Ascending aorta (tissue), 2 donors: ENCODE measurements at regions of chr15 and their contacts with region 1.

Region 1: GRCh38 chr15:58070801-58071418 is 5.4 kb upstream of the ALDH1A2 start:
- DNase-seq: no peak
- H3K4me3 ChIP-seq: no peak overlapping the region
- H3K27ac ChIP-seq: no peak overlapping the region
- H3K4me1 ChIP-seq: no peaks in the 10 kb centered on the region
- H3K27me3 ChIP-seq: no peaks in the 10 kb centered on the region
- CTCF ChIP-seq: peak; percentile 44 to 73 (median 68)

Region 2: GRCh38 chr15:57751177-57751800 is 319.6 kb before region 1 on chr15:
- intact Hi-C with region 1: loop called (anchors 2 kb)
- DNase-seq: no peak
- H3K4me3 ChIP-seq: no peak overlapping the region
- H3K27ac ChIP-seq: no peak overlapping the region
- H3K4me1 ChIP-seq: peaks cover 0 to 2% of the 10 kb centered on the region in 2 donors
- H3K27me3 ChIP-seq: no peaks in the 10 kb centered on the region
- CTCF ChIP-seq: peak; percentile 26 to 55 (median 34)

Region 3: DNA sequence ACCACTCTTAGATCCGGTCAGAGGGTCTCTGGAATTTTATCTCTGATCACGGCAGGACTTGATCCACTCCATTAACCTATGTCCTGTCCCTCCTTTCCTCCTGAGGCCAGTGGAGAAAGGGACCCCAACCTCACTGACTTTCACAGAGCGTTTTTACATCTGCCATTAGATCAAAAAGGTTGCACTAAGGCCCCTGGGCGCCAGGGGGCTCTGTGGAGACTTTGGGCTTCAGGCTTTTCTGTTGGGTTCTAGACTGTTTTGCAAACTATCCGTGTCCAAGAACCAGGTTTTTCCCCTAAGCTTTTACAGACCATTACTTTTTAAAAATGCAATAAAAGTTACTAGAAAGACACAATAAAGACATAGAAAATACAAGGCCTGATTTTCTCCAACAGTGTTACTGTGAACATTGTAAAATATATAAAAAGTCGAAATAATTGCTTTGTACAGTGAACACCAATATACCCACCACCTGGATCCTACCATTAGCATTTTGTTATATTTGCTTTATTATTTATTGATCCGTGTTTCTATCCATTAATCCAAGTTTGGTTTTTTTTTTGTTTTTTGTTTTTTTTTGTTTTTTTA is 204.7 kb before region 1 on chr15:
- intact Hi-C with region 1: loop called (anchors 2 kb)
- DNase-seq: peak in 1 of 2 donors; percentile 67
- H3K4me3 ChIP-seq: no peak overlapping the region
- H3K27ac ChIP-seq: no peak overlapping the region
- H3K4me1 ChIP-seq: no peaks in the 10 kb centered on the region
- H3K27me3 ChIP-seq: no peaks in the 10 kb centered on the region
- CTCF ChIP-seq: peak in 2 of 3 experiments; percentile 17 to 49